K562 (cell line): ENCODE measurements at regions of chrX and their contacts with region 1.

Region 1: GRCh38 chrX:7147978-7148824 is at the start of gene PUDP:
- DNase-seq: peak; percentile 86 to 96 (median 96)
- ATAC-seq: peak; percentile 92
- H3K4me3 ChIP-seq: peak within 1 kb of the TSS; percentile 71
- H3K27ac ChIP-seq: peak within 1 kb of the TSS; percentile 88
- H3K4me1 ChIP-seq: peaks cover 10 to 17% of the 10 kb centered on the region in 2 experiments; a peak in 4 of 5 replicates
- H3K27me3 ChIP-seq: no peaks in the 10 kb centered on the region
- CTCF ChIP-seq: peak in 1 of 3 experiments; percentile 14; a peak in 3 of 6 replicates
- EP300 ChIP-seq: no peak
- POLR2A ChIP-seq: peak; percentile 71
- RAD21 ChIP-seq: no peak
- polyA plus RNA-seq, gene PUDP: 61.9 to 63.0 TPM

Region 2: DNA sequence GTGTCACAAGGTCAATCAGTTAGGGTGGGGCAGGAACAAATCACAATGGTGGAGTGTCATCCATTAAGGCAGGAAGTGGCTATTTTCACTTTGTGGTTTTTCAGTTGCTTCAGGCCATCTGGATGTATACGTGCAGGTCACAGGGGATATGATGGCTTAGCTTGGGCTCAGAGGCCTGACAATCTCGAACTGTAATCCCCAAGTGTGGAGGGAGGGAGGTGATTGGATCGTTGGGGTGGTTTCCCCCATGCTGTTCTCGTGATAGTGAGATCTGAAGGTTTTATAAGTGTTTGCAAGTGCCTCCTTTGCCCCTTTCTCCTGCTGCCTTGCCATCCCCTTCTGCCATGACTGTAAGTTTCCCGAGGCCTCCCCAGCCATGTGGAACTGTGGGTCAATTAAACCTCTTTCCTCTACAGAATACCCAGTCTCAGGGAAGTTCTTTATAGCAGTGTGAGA is 37.4 kb before region 1 on chrX:
- CTCF ChIA-PET with region 1: no interaction called
- POLR2A ChIA-PET with region 1: no interaction called
- in situ Hi-C with region 1: no loop called
- intact Hi-C with region 1: no loop called
- DNase-seq: peak in 1 of 4 experiments; percentile 32
- ATAC-seq: peak; percentile 36; the same call in 1 of the 3 replicates
- H3K4me3 ChIP-seq: no peak overlapping the region
- H3K27ac ChIP-seq: peak overlapping the region; percentile 48; the same call in 1 of the 3 replicates
- H3K4me1 ChIP-seq: no peaks in the 10 kb centered on the region; a peak in 3 of 5 replicates
- H3K27me3 ChIP-seq: no peaks in the 10 kb centered on the region
- CTCF ChIP-seq: no peak
- EP300 ChIP-seq: no peak
- POLR2A ChIP-seq: no peak
- RAD21 ChIP-seq: no peak

Region 3: GRCh38 chrX:7637066-7637465 is 488.9 kb after region 1 on chrX:
- CTCF ChIA-PET with region 1: no interaction called
- POLR2A ChIA-PET with region 1: no interaction called
- in situ Hi-C with region 1: no loop called
- intact Hi-C with region 1: no loop called
- DNase-seq: no peak
- ATAC-seq: no peak
- H3K4me3 ChIP-seq: no peak overlapping the region
- H3K27ac ChIP-seq: no peak overlapping the region
- H3K4me1 ChIP-seq: no peaks in the 10 kb centered on the region
- H3K27me3 ChIP-seq: no peaks in the 10 kb centered on the region
- CTCF ChIP-seq: no peak
- EP300 ChIP-seq: no peak
- POLR2A ChIP-seq: no peak
- RAD21 ChIP-seq: no peak

Region 4: GRCh38 chrX:7925867-7926472 is 777.8 kb after region 1 on chrX:
- CTCF ChIA-PET with region 1: no interaction called
- POLR2A ChIA-PET with region 1: no interaction called
- in situ Hi-C with region 1: no loop called
- intact Hi-C with region 1: loop called (anchors 10 kb)
- DNase-seq: peak; percentile 32 to 78 (median 36)
- ATAC-seq: peak; percentile 61
- H3K4me3 ChIP-seq: peak overlapping the region; percentile 63; the same call in 1 of the 2 replicates
- H3K27ac ChIP-seq: no peak overlapping the region
- H3K4me1 ChIP-seq: peaks cover 3 to 5% of the 10 kb centered on the region in 2 experiments; a peak in 4 of 5 replicates
- H3K27me3 ChIP-seq: no peaks in the 10 kb centered on the region
- CTCF ChIP-seq: peak; percentile 69 to 74 (median 72)
- EP300 ChIP-seq: no peak
- POLR2A ChIP-seq: no peak
- RAD21 ChIP-seq: peak; percentile 53 to 69